Activated CD8-positive, alpha-beta T cell treated with anti-CD3 and anti-CD28 coated beads for 36 hours (primary cell): ENCODE measurements at regions of chr11 and their contacts with region 1.

Region 1: DNA sequence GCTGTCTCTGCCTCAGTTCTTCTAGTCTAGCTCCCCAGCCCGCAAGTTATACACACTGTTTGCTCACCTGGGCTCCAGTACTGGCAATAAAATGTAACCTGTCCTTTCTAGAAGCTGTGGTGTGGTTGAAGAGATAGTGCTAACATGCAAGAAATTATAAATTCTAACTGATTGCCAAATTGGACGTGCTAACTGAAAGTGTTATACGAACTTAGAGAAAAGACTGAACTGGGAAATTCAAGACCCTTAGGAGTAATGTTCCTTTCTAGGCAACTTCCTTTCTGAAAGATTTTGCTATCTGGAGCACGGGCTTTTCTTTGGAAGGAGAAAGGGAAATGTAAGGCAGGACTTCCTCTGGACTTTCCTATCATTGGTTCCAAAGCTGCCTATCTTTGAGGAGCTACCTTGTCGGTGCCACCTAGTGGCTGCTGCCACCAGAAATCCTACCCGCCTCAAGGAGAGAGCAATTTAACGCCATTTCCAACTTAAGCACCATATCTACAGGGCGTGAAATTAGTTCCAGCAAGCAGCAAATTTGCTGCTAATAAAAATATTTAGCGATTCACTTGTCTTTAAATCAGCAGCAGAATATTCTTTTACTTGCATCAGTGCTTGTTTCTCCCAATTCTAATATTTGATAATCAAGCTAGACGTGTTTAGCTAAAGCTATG is 12.7 kb upstream of the TMEM218 start:
- DNase-seq: peak; percentile 68
- ATAC-seq: peak; percentile 73
- H3K4me3 Mint-ChIP-seq: no peak overlapping the region
- H3K27ac Mint-ChIP-seq: no peak overlapping the region
- H3K4me1 Mint-ChIP-seq: peaks cover 3% of the 10 kb centered on the region
- H3K27me3 Mint-ChIP-seq: peaks cover 20% of the 10 kb centered on the region
- CTCF ChIP-seq: peak; percentile 54

Region 2: GRCh38 chr11:125079151-125079877 is 44.8 kb before region 1 on chr11:
- CTCF ChIA-PET with region 1: no interaction called
- POLR2A ChIA-PET with region 1: no interaction called
- intact Hi-C with region 1: no loop called
- DNase-seq: no peak
- ATAC-seq: no peak
- H3K4me3 Mint-ChIP-seq: no peak overlapping the region
- H3K27ac Mint-ChIP-seq: no peak overlapping the region
- H3K4me1 Mint-ChIP-seq: no peaks in the 10 kb centered on the region
- H3K27me3 Mint-ChIP-seq: no peaks in the 10 kb centered on the region
- CTCF ChIP-seq: no peak

Region 3: DNA sequence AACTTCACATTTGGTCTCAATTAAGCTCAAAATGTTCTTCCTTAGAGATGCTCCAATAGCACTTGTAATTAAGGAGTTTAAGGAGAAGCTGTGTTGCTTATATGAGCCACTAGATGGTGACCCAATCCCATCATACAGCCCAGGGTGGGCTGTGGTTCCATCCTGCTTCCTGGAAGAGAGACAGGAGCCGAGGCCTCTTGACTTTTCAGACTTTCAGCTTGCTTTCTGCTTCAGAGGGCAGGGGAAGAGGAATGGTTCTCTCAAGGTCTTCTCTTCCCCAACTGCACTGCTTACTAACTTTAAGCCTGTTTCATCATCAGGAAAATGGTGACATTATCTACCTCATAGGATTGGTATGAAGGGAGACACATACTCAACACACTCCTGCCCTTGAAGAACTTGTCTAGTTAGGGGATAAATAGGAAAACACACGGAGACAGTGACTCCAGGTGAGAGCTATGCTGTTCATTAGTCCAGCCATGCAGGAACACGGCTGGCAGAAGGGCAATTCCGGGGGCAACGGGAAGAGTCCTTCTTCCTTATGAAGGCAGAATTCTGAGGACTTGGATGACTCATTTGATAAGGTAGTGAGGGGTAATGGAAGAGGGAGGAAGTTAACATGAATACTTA is 32.7 kb before region 1 on chr11:
- CTCF ChIA-PET with region 1: interaction called, 30 read pairs
- POLR2A ChIA-PET with region 1: no interaction called
- intact Hi-C with region 1: no loop called
- DNase-seq: peak; percentile 19
- ATAC-seq: peak; percentile 72
- H3K4me3 Mint-ChIP-seq: no peak overlapping the region
- H3K27ac Mint-ChIP-seq: no peak overlapping the region
- H3K4me1 Mint-ChIP-seq: peaks cover 5% of the 10 kb centered on the region
- H3K27me3 Mint-ChIP-seq: no peaks in the 10 kb centered on the region
- CTCF ChIP-seq: peak; percentile 65

Region 4: GRCh38 chr11:125111343-125112207 is 12.5 kb before region 1 on chr11 and contains the start of gene TMEM218:
- CTCF ChIA-PET with region 1: interaction called, 72 read pairs
- POLR2A ChIA-PET with region 1: interaction called, 6 read pairs
- intact Hi-C with region 1: no loop called
- DNase-seq: peak; percentile 98
- ATAC-seq: peak; percentile 97
- H3K4me3 Mint-ChIP-seq: peak within 1 kb of the TSS; percentile 85
- H3K27ac Mint-ChIP-seq: peak within 1 kb of the TSS; percentile 91
- H3K4me1 Mint-ChIP-seq: peaks cover 17% of the 10 kb centered on the region
- H3K27me3 Mint-ChIP-seq: no peaks in the 10 kb centered on the region
- CTCF ChIP-seq: no peak
- total RNA-seq, gene TMEM218: 12.7 to 13.3 TPM

Region 5: DNA sequence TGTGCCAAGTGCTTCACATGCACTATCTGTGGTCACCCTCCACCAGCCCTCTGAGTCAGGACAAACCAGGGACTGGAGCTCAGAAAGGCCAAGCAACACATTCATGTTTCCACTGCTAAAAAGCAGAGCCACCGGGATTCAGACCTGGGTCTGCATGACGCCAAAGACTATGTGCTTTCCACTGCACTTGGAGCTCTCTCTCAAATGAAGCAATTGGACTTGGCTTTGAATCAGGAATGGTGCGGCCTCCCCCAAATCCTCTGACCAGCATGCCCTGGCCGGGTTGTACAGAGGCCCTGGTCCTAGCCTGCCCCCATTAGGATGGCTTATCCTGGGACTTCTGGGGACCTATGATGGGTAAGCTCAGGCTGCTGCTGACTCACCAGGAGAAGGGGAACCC is 121.2 kb after region 1 on chr11:
- CTCF ChIA-PET with region 1: no interaction called
- POLR2A ChIA-PET with region 1: no interaction called
- intact Hi-C with region 1: no loop called
- DNase-seq: no peak
- ATAC-seq: no peak
- H3K4me3 Mint-ChIP-seq: no peak overlapping the region
- H3K27ac Mint-ChIP-seq: no peak overlapping the region
- H3K4me1 Mint-ChIP-seq: no peaks in the 10 kb centered on the region
- H3K27me3 Mint-ChIP-seq: no peaks in the 10 kb centered on the region
- CTCF ChIP-seq: no peak